ENCODE measurements at regions of chr1 and their contacts with region 1.

Region 1: GRCh38 chr1:90964444-90965035 is 57.3 kb downstream of the ZNF644 start:
- DNase-seq: peak in 1 of 2 experiments; percentile 8
- H3K4me3 ChIP-seq: no peak overlapping the region
- H3K4me1 ChIP-seq: peaks cover 3% of the 10 kb centered on the region; the same call in 1 of the 2 replicates
- H3K27me3 ChIP-seq: no peaks in the 10 kb centered on the region

Region 2: DNA sequence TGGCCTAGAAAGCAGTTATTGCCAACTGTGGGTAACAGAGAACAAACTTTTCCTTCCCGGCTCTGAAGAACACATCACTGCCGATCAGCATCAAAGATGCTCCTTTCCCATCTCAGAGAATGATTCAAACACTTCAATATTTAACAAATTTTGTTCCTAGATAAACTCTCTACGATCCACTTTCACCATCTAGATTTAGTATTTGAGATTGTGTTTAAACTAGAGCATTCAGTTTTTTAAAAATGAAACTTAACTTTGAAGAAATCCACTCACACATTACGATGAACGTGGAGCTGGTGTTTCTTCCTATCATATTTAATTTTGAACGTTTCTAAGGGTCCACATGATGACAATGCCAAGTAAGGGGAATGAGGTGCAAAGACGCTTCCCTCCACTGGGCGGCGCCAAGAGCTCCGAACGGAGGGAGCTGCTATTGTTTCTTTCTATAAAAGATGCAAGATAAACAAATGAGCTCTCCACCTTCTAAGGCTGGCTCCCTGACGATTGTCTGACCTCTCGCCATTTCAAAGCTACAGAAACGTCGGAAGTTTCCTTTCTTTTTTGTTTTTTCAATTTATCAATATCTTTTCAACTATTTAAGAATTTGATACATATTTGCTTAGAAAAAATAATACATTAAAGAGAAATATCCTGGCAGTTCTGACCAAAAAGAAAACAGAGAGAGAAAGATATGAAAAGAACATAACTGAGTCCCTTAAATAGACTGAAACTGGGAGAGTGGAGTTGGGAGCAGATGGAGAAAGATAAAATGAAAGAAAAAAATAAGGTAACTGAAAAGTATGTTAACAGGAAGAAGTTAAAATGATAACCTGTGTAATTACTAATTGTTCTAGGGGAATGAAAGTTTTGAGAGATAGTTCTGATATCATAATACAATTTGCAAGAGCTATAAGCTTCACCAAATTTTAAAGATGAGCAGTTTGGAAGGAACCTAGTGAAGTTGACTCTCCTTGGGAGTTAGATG is 243.0 kb before region 1 on chr1:
- in situ Hi-C with region 1: loop called (anchors 25 kb)
- DNase-seq: peak; percentile 83 to 85
- H3K4me3 ChIP-seq: no peak overlapping the region
- H3K4me1 ChIP-seq: no peaks in the 10 kb centered on the region; the same call in 1 of the 2 replicates
- H3K27me3 ChIP-seq: peaks cover 7% of the 10 kb centered on the region; the same call in 1 of the 2 replicates

Region 3: DNA sequence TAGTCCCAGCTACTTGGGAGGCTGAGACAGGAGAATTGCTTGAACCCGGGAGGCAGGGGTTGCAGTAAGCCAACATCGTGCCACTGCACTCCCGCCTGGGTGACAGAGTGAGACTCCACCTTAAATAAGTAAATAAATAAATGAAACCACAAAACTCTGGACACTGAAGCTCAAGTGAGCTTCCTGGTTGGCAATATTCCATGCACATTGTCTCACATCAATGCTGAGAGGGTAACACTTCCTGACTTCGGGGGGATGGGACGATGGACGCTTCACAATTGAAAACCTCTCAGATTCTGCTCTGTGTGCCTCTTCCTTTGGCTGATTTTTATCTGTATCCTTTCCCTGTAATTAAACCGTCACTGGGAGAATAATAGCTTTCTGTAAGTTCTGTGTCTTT is 127.3 kb after region 1 on chr1:
- in situ Hi-C with region 1: no loop called
- DNase-seq: peak in 1 of 2 experiments; percentile 32
- H3K4me3 ChIP-seq: no peak overlapping the region
- H3K4me1 ChIP-seq: peaks cover 13% of the 10 kb centered on the region
- H3K27me3 ChIP-seq: no peaks in the 10 kb centered on the region

Measured in HAP-1 (cell line).